Caco-2 (cell line): ENCODE measurements at regions of chr1 and their contacts with region 1.

Region 1: GRCh38 chr1:240027059-240027462 is 64.6 kb upstream of the FMN2 start:
- DNase-seq: peak in 1 of 2 experiments; percentile 49
- H3K4me3 ChIP-seq: no peak overlapping the region
- H3K4me3 Mint-ChIP-seq: no peak overlapping the region
- H3K27ac Mint-ChIP-seq: no peak overlapping the region
- H3K4me1 ChIP-seq: no peaks in the 10 kb centered on the region
- H3K4me1 Mint-ChIP-seq: no peaks in the 10 kb centered on the region
- H3K27me3 ChIP-seq: no peaks in the 10 kb centered on the region
- H3K27me3 Mint-ChIP-seq: peaks cover 8% of the 10 kb centered on the region
- CTCF ChIP-seq: peak; percentile 74 to 83

Region 2: DNA sequence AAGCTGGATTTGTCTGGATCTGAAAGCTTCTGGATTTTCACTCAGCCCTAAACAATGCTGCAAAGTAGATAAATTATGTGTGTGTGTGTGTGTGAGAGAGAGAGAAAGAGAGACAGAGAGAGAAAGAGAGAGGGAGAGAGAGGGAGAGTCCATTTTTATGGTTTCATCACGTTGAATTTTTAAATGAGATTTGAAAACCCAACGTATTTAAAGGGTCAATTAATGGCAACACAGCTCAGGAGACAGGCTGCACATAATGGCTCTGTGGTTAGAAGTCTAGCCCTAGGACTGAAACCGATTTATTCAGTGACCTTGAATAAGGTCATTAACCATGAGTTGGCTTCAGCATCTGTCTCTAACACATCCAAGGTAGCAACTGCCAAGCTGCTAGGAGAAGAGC is 29.3 kb after region 1 on chr1:
- CTCF ChIA-PET with region 1: no interaction called
- POLR2A ChIA-PET with region 1: no interaction called
- intact Hi-C with region 1: no loop called
- DNase-seq: no peak
- H3K4me3 ChIP-seq: no peak overlapping the region
- H3K4me3 Mint-ChIP-seq: no peak overlapping the region
- H3K27ac Mint-ChIP-seq: no peak overlapping the region
- H3K4me1 ChIP-seq: no peaks in the 10 kb centered on the region
- H3K4me1 Mint-ChIP-seq: no peaks in the 10 kb centered on the region
- H3K27me3 ChIP-seq: no peaks in the 10 kb centered on the region
- H3K27me3 Mint-ChIP-seq: peaks cover 8% of the 10 kb centered on the region
- CTCF ChIP-seq: no peak

Region 3: GRCh38 chr1:240149484-240150094 is 122.5 kb after region 1 on chr1:
- CTCF ChIA-PET with region 1: interaction called, 5 read pairs
- POLR2A ChIA-PET with region 1: no interaction called
- intact Hi-C with region 1: loop called (anchors 1 kb)
- DNase-seq: peak in 1 of 2 experiments; percentile 45
- H3K4me3 ChIP-seq: no peak overlapping the region
- H3K4me3 Mint-ChIP-seq: no peak overlapping the region
- H3K27ac Mint-ChIP-seq: no peak overlapping the region
- H3K4me1 ChIP-seq: no peaks in the 10 kb centered on the region
- H3K4me1 Mint-ChIP-seq: no peaks in the 10 kb centered on the region
- H3K27me3 ChIP-seq: no peaks in the 10 kb centered on the region
- H3K27me3 Mint-ChIP-seq: peaks cover 7% of the 10 kb centered on the region
- CTCF ChIP-seq: peak; percentile 60 to 66

Region 4: DNA sequence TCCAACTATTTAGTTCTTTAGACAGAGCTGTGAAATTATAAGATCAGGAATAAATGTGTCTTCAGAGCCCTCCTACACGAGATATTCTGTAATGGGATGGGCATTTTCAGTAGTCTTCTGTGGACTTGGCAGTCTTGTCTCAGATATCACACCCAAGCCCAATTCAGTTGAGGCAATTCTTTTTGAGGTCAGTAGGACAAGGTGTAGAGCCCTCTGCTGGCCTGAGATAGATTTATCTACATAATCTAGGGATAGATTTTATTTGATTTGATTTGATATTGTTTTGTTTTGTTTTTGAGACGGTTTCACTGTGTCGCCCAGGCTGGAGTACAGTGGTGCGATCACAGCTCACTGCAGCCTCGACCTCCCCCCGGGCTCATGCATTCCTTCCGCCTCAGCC is 142.1 kb after region 1 on chr1:
- CTCF ChIA-PET with region 1: no interaction called
- POLR2A ChIA-PET with region 1: no interaction called
- intact Hi-C with region 1: loop called (anchors 5 kb)
- DNase-seq: no peak
- H3K4me3 ChIP-seq: no peak overlapping the region
- H3K4me3 Mint-ChIP-seq: no peak overlapping the region
- H3K27ac Mint-ChIP-seq: no peak overlapping the region
- H3K4me1 ChIP-seq: no peaks in the 10 kb centered on the region
- H3K4me1 Mint-ChIP-seq: no peaks in the 10 kb centered on the region
- H3K27me3 ChIP-seq: no peaks in the 10 kb centered on the region
- H3K27me3 Mint-ChIP-seq: peaks cover 6% of the 10 kb centered on the region
- CTCF ChIP-seq: no peak

Region 5: DNA sequence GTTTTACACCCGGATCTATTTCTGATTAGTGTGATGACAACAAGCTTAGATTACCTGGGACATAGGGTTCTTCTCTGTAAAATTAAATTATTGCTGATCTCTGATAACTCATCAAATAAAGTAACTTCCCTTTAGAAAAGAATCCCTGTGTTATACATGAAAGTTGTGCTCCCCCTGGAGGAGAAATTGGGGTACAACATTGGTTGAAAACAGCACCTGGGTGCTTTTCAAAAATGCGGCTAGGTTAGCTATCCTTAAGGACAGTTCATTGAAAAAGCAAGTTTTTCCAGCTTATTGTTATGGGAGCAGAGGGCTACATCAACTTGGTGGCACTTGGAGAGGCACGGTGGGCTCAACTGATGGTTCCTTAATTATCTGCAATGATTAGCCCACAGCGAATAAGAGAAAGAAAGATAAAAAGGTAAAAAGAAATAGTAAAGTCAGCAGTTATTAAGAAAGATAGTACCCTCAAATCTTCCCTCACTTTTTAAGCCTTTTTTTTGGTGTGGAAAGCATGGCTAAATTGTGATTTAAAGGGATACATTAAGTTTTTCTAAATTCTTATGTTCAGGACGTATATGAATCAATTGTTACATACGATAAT is 162.4 kb after region 1 on chr1:
- CTCF ChIA-PET with region 1: no interaction called
- POLR2A ChIA-PET with region 1: no interaction called
- intact Hi-C with region 1: loop called (anchors 1 kb)
- DNase-seq: peak; percentile 35 to 45
- H3K4me3 ChIP-seq: no peak overlapping the region
- H3K4me3 Mint-ChIP-seq: no peak overlapping the region
- H3K27ac Mint-ChIP-seq: no peak overlapping the region
- H3K4me1 ChIP-seq: 0 out of 2 replicates have a peak, but pooled peaks cover 8% of the 10 kb centered on the region
- H3K4me1 Mint-ChIP-seq: peaks cover 5% of the 10 kb centered on the region
- H3K27me3 ChIP-seq: no peaks in the 10 kb centered on the region
- H3K27me3 Mint-ChIP-seq: peaks cover 11% of the 10 kb centered on the region
- CTCF ChIP-seq: peak; percentile 75 to 81

Region 6: DNA sequence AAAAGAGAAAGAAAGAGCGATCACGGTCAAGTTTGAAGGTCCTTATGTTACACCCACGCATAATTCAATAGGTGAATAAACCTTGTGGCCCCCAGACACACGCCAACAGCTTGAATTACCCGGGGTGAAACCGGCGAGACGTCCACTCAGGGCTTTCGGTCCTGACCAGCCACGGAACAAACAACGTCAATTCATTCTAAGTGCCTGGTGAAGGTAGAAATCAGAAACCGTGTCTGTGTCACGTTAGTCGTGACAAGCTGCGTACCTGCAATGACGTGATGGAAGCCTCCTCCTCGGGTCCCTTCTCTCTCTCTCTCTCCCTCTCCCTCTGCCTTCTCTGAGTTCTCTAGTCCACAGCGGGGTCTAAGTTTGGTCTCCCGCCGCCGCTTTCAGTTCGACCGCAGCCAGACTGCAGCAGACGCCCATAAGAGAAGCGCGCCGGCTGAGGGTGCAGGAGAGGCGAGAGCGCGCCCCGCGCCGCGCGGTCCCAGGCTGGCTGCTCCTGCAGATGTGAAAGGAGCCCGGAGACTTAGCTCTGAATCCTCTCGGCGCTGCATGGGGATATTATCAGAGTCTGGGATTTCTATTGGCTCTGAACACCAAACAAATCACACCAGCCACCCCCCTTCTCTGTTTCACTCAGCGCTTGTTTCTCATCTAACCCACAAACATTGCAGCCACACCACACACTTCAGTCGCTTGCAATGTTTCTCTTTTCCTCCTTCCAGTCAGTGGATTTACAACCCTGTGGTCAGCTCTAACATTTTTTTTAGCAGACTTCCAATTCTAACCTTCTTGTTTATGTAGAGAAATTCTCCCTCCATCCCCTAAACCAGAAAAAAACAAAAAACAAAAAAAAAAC is 584.8 kb after region 1 on chr1 and contains the start of gene GREM2:
- CTCF ChIA-PET with region 1: no interaction called
- POLR2A ChIA-PET with region 1: no interaction called
- intact Hi-C with region 1: loop called (anchors 10 kb)
- DNase-seq: peak; percentile 36 to 51
- H3K4me3 ChIP-seq: peak within 1 kb of the TSS; percentile 40
- H3K4me3 Mint-ChIP-seq: peak within 1 kb of the TSS; percentile 84
- H3K27ac Mint-ChIP-seq: peak within 1 kb of the TSS; percentile 40
- H3K4me1 ChIP-seq: peaks cover 11% of the 10 kb centered on the region; the same call in 1 of the 2 replicates
- H3K4me1 Mint-ChIP-seq: peaks cover 14% of the 10 kb centered on the region
- H3K27me3 ChIP-seq: no peaks in the 10 kb centered on the region; the same call in 1 of the 2 replicates
- H3K27me3 Mint-ChIP-seq: peaks cover 3% of the 10 kb centered on the region
- CTCF ChIP-seq: no peak
- total RNA-seq, gene GREM2: 0.36 and 0.51 TPM in 2 replicates